Activated CD4-positive, alpha-beta memory T cell treated with anti-CD3 and anti-CD28 coated beads for 36 hours (primary cell): ENCODE measurements at regions of chrX and their contacts with region 1.

Region 1: DNA sequence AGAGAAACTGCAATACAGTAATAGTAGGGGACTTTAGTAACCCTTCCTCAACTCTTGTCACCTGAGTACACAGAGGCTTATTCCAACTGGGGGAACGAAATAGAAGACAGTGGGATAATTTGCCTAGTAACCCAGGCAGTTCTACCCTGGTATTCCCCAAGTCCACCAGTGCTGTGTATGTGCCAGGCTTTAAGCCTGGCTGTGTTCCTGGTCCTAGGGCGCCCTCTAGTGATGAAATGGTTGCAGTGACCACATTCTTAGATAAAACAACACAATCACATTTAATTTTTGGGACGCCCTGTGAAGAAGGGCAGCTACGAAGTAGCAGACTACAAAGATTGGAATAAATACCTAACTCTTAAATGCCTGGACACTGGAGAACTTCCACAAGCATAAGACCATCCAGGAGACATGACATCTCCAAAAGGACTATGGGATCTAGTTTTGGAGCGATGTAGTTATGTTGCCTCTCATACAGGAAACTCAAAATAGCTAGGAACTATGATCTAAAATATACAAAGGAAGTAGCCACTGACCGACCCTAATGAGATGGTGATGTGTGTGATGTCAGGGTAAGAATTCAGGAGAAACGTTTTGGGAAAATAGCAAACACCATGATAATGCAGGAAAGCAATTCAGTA is 288.5 kb upstream of the ZCCHC13 start:
- DNase-seq: peak; percentile 60
- H3K4me3 Mint-ChIP-seq: no peak overlapping the region
- H3K27ac Mint-ChIP-seq: no peak overlapping the region
- H3K4me1 Mint-ChIP-seq: no peaks in the 10 kb centered on the region
- H3K27me3 Mint-ChIP-seq: no peaks in the 10 kb centered on the region

Region 2: GRCh38 chrX:73855546-73855945 is 160.0 kb before region 1 on chrX:
- CTCF ChIA-PET with region 1: interaction called, 58 read pairs
- POLR2A ChIA-PET with region 1: no interaction called
- intact Hi-C with region 1: loop called (anchors 1 kb)
- DNase-seq: peak; percentile 66
- H3K4me3 Mint-ChIP-seq: no peak overlapping the region
- H3K27ac Mint-ChIP-seq: no peak overlapping the region
- H3K4me1 Mint-ChIP-seq: no peaks in the 10 kb centered on the region
- H3K27me3 Mint-ChIP-seq: no peaks in the 10 kb centered on the region

Region 3: GRCh38 chrX:73977534-73978169 is 37.8 kb before region 1 on chrX:
- CTCF ChIA-PET with region 1: no interaction called
- POLR2A ChIA-PET with region 1: no interaction called
- intact Hi-C with region 1: no loop called
- DNase-seq: no peak
- H3K4me3 Mint-ChIP-seq: no peak overlapping the region
- H3K27ac Mint-ChIP-seq: peak overlapping the region; percentile 65
- H3K4me1 Mint-ChIP-seq: peaks cover 32% of the 10 kb centered on the region
- H3K27me3 Mint-ChIP-seq: no peaks in the 10 kb centered on the region